ENCODE measurements at regions of chr4 and their contacts with region 1.

Region 1: GRCh38 chr4:41538017-41538733 is at the start of gene LIMCH1:
- DNase-seq: no peak
- H3K4me3 ChIP-seq: no peak within 1 kb of the TSS
- H3K27ac ChIP-seq: no peak within 1 kb of the TSS
- H3K4me1 ChIP-seq: peaks cover 45% of the 10 kb centered on the region
- H3K27me3 ChIP-seq: peaks cover 4 to 11% of the 10 kb centered on the region in 2 experiments
- CTCF ChIP-seq: no peak
- POLR2A ChIP-seq: no peak
- total RNA-seq, gene LIMCH1: 18.6 and 32.8 TPM in 2 replicates

Region 2: DNA sequence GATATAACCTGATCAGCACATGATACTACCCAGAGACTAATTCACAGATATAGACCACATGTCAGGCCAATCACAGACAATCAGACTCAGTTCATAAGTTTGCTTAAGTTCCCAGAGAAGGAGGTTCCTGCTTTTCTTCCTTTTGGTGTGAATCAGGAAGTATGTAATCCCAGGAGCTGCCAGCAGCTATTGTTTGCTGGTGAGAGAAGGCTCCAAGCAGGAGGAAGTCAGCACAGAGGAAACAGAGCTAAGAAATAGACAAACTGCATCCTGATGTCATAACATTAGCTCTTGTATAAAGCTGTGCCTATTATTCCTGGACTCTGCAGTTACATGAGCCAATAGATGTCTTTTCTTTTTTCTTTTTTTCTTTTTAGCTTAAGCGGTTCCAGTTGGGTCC is 230.5 kb before region 1 on chr4:
- CTCF ChIA-PET with region 1: no interaction called
- POLR2A ChIA-PET with region 1: no interaction called
- dilution Hi-C with region 1: no loop called
- intact Hi-C with region 1: loop called (anchors 5 kb)
- DNase-seq: peak; percentile 95
- H3K4me3 ChIP-seq: no peak overlapping the region
- H3K27ac ChIP-seq: peak overlapping the region; percentile 53
- H3K4me1 ChIP-seq: peaks cover 11% of the 10 kb centered on the region
- H3K27me3 ChIP-seq: peaks cover 6 to 7% of the 10 kb centered on the region in 2 experiments
- CTCF ChIP-seq: no peak
- POLR2A ChIP-seq: no peak

Region 3: GRCh38 chr4:41384992-41385391 is 153.2 kb before region 1 on chr4:
- CTCF ChIA-PET with region 1: no interaction called
- POLR2A ChIA-PET with region 1: no interaction called
- dilution Hi-C with region 1: no loop called
- intact Hi-C with region 1: loop called (anchors 1 kb)
- DNase-seq: peak; percentile 99
- H3K4me3 ChIP-seq: no peak overlapping the region
- H3K27ac ChIP-seq: peak overlapping the region; percentile 39
- H3K4me1 ChIP-seq: peaks cover 18% of the 10 kb centered on the region
- H3K27me3 ChIP-seq: peaks cover 3 to 5% of the 10 kb centered on the region in 2 experiments
- CTCF ChIP-seq: no peak
- POLR2A ChIP-seq: peak; percentile 49

Region 4: DNA sequence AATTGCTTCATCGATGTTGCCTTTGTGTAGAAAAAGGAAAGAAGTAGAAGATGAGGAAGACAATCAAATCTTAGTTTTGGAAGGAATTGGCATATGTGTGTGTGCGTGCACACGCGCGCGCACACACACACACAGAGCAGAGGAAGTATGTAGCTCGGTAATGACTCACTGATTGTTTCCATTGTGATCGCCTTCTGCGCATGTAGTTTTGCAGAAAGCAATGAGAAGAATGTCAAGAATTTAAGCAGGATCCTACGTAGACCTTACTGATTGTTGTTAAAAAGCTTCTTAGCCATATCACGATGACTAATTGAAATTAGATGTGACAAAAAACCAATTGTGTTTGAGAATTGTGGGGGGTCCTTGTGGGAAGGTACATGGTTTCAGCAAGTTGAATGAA is 13.0 kb before region 1 on chr4:
- CTCF ChIA-PET with region 1: interaction called, 7 read pairs
- POLR2A ChIA-PET with region 1: no interaction called
- dilution Hi-C with region 1: no loop called
- intact Hi-C with region 1: loop called (anchors 1 kb)
- DNase-seq: peak; percentile 96
- H3K4me3 ChIP-seq: no peak overlapping the region
- H3K27ac ChIP-seq: peak overlapping the region; percentile 98
- H3K4me1 ChIP-seq: peaks cover 21% of the 10 kb centered on the region
- H3K27me3 ChIP-seq: no peaks in the 10 kb centered on the region
- CTCF ChIP-seq: no peak
- POLR2A ChIP-seq: no peak

Region 5: GRCh38 chr4:41632481-41633073 is 94.4 kb after region 1 on chr4:
- CTCF ChIA-PET with region 1: no interaction called
- POLR2A ChIA-PET with region 1: no interaction called
- dilution Hi-C with region 1: no loop called
- intact Hi-C with region 1: no loop called
- DNase-seq: no peak
- H3K4me3 ChIP-seq: no peak overlapping the region
- H3K27ac ChIP-seq: no peak overlapping the region
- H3K4me1 ChIP-seq: no peaks in the 10 kb centered on the region
- H3K27me3 ChIP-seq: peaks cover 0 to 10% of the 10 kb centered on the region in 2 experiments
- CTCF ChIP-seq: no peak
- POLR2A ChIP-seq: no peak

Region 6: GRCh38 chr4:41661442-41662076 is 123.4 kb after region 1 on chr4:
- CTCF ChIA-PET with region 1: interaction called, 4 read pairs
- POLR2A ChIA-PET with region 1: no interaction called
- dilution Hi-C with region 1: no loop called
- intact Hi-C with region 1: loop called (anchors 1 kb)
- DNase-seq: peak; percentile 69
- H3K4me3 ChIP-seq: no peak overlapping the region
- H3K27ac ChIP-seq: no peak overlapping the region
- H3K4me1 ChIP-seq: no peaks in the 10 kb centered on the region
- H3K27me3 ChIP-seq: peaks cover 2 to 12% of the 10 kb centered on the region in 2 experiments
- CTCF ChIP-seq: peak; percentile 82 to 87
- POLR2A ChIP-seq: no peak

Measured in endothelial cell of umbilical vein (primary cell).